OCI-LY7 (cell line): ENCODE measurements at regions of chr4 and their contacts with region 1.

Region 1: GRCh38 chr4:140637836-140638235 is 69.1 kb upstream of the UCP1 start:
- DNase-seq: peak; percentile 85
- H3K4me3 ChIP-seq: no peak overlapping the region
- H3K27ac ChIP-seq: no peak overlapping the region
- H3K4me1 ChIP-seq: peaks cover 20% of the 10 kb centered on the region
- CTCF ChIP-seq: peak; percentile 99

Region 2: GRCh38 chr4:140427106-140427961 is 210.5 kb before region 1 on chr4 and contains the start of gene CLGN:
- CTCF ChIA-PET with region 1: no interaction called
- POLR2A ChIA-PET with region 1: no interaction called
- intact Hi-C with region 1: loop called (anchors 1 kb)
- DNase-seq: peak; percentile 82
- H3K4me3 ChIP-seq: peak within 1 kb of the TSS; percentile 72
- H3K27ac ChIP-seq: no peak within 1 kb of the TSS
- H3K4me1 ChIP-seq: peaks cover 10% of the 10 kb centered on the region
- CTCF ChIP-seq: peak; percentile 78
- total RNA-seq, gene CLGN: 1.1 and 1.3 TPM in 2 replicates

Region 3: DNA sequence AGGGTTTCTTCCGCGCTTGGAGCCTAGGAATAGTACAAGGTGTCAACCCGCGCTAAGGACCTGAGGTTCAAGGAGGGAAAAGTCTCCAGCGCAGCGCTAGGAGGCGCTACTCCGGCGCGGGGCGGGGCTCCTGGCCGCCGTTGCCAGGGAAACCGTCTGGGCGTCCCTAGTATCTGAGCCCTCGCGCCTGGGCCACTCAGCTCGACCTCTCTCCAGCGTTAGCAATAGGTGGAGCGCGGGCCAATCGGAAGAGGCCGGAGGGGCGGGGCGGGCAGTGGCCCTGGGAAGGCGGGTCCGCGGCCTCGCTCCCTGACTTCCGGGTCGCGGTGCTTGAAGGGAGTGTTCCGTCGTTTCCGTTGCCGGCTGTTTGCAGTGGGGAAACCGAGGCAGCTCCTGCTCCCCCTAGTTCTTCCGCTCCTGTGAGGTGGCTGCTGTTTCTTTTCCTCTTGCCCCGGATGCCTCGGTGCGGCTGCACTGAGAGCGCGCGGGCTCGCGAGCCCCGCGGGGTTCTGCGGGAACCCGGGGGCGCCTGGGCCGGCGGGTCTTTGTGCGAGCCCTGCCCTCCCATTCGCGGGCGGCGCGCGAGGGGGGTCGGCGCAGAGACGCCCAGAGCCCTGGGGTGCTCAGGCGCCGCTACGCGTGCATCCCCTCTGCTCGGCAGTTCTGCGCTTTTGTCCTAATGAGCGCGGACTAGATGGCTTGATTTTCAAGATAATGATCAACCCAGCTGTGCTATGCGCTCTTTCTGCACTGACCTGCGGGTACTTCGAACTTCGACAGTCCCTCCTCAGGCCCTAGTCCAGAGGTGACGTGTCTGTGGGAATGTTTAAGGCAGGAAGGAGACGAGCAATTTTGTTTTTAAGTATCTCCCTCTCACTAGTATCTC is 113.7 kb before region 1 on chr4 and contains the start of gene ELMOD2:
- CTCF ChIA-PET with region 1: no interaction called
- POLR2A ChIA-PET with region 1: interaction called, 3 read pairs
- intact Hi-C with region 1: loop called (anchors 1 kb)
- DNase-seq: peak; percentile 99
- H3K4me3 ChIP-seq: peak within 1 kb of the TSS; percentile 80
- H3K27ac ChIP-seq: peak within 1 kb of the TSS; percentile 42
- H3K4me1 ChIP-seq: peaks cover 18% of the 10 kb centered on the region
- CTCF ChIP-seq: peak; percentile 95
- total RNA-seq, gene ELMOD2: 16.2 and 20.0 TPM in 2 replicates

Region 4: GRCh38 chr4:140595065-140595464 is 42.8 kb before region 1 on chr4:
- CTCF ChIA-PET with region 1: interaction called, 4 read pairs
- POLR2A ChIA-PET with region 1: interaction called, 5 read pairs
- intact Hi-C with region 1: loop called (anchors 1 kb)
- DNase-seq: peak; percentile 73
- H3K4me3 ChIP-seq: no peak overlapping the region
- H3K27ac ChIP-seq: no peak overlapping the region
- H3K4me1 ChIP-seq: peaks cover 2% of the 10 kb centered on the region
- CTCF ChIP-seq: peak; percentile 87

Region 5: DNA sequence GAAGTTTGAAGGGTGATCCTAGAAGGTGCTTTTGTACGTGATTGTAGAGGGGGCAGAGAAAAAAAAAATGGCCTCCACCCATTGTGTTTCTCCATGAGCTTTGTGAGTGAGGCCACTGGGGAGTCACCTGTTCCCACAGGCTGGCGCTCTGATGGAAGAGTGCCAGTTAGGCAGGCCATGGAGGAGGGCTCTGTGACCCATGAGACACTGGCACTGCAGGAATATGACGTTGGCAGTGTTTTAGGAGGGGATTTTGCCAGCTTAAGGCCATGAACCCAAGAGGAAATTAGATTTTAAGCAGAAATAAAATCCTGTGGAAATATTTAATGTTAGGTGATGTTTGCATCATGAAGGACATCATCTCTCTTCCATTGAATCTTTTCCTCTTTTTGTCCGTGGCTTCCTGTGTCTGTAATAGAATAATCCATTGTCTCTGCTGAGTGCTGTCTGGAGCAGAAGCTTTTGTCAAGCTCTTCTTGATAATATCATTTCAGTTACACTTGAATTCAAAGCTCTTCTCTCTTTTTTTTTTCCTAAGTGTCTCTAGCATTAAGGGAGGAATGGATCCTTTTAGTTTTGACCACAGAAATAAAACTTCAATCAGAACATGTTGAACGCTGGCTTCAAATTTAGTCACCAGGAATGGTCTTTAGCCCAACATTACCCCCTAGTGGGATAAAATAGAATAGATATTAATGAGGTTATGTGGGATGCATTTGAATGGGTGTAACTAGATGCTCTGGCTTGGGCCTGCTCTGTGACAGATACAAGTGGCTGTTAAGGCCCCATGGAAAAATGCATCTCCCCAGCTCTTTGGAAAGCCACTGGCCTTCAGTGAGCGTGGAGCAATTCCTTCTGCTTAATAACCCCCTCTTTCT is 28.0 kb before region 1 on chr4:
- CTCF ChIA-PET with region 1: interaction called, 4 read pairs
- POLR2A ChIA-PET with region 1: interaction called, 7 read pairs
- intact Hi-C with region 1: loop called (anchors 1 kb)
- DNase-seq: peak; percentile 75
- H3K4me3 ChIP-seq: no peak overlapping the region
- H3K27ac ChIP-seq: no peak overlapping the region
- H3K4me1 ChIP-seq: peaks cover 32% of the 10 kb centered on the region
- CTCF ChIP-seq: peak; percentile 87

Region 6: GRCh38 chr4:140626661-140627376 is 11.0 kb before region 1 on chr4:
- CTCF ChIA-PET with region 1: no interaction called
- POLR2A ChIA-PET with region 1: interaction called, 16 read pairs
- intact Hi-C with region 1: no loop called
- DNase-seq: no peak
- H3K4me3 ChIP-seq: no peak overlapping the region
- H3K27ac ChIP-seq: no peak overlapping the region
- H3K4me1 ChIP-seq: peaks cover 41% of the 10 kb centered on the region
- CTCF ChIP-seq: peak; percentile 39; the same call in 1 of the 2 replicates

Region 7: DNA sequence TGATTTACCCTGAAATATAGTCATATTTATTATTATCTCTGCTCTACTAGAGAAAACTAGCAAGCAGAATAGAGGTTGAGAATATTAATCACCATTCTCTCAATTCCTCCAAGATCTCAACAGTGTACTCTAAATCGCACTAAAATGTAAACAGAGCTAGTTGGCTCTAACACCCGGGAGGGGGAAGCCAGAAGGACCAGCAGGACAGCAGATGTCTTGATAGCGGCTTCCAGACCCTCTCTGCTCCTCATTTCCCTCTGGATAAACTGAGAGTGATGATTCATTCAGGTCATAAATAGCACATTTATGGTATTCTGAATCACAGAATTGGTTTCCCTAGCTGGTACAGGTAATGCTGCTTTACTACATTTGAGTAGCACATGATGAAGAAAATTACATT is 35.9 kb after region 1 on chr4:
- CTCF ChIA-PET with region 1: no interaction called
- POLR2A ChIA-PET with region 1: no interaction called
- intact Hi-C with region 1: no loop called
- DNase-seq: no peak
- H3K4me3 ChIP-seq: no peak overlapping the region
- H3K27ac ChIP-seq: no peak overlapping the region
- H3K4me1 ChIP-seq: peaks cover 15% of the 10 kb centered on the region
- CTCF ChIP-seq: no peak

Region 8: GRCh38 chr4:140851032-140851636 is 213.3 kb after region 1 on chr4:
- CTCF ChIA-PET with region 1: interaction called, 3 read pairs
- POLR2A ChIA-PET with region 1: interaction called, 3 read pairs
- intact Hi-C with region 1: loop called (anchors 1 kb)
- DNase-seq: peak; percentile 86
- H3K4me3 ChIP-seq: no peak overlapping the region
- H3K27ac ChIP-seq: no peak overlapping the region
- H3K4me1 ChIP-seq: peaks cover 27% of the 10 kb centered on the region
- CTCF ChIP-seq: peak; percentile 100